ENCODE measurements at regions of chr1 and their contacts with region 1.

Region 1: GRCh38 chr1:212186427-212187207 is 98.6 kb upstream of the PPP2R5A start:
- DNase-seq: peak in 3 of 5 donors; percentile 10 to 22 (median 13)
- H3K4me3 ChIP-seq: peak overlapping the region in 1 of 2 donors; percentile 9
- H3K4me3 Mint-ChIP-seq: peak overlapping the region; percentile 68 to 93 (median 84)
- H3K27ac ChIP-seq: no peak overlapping the region
- H3K27ac Mint-ChIP-seq: peak overlapping the region in 6 of 7 donors; percentile 30 to 94 (median 90)
- H3K4me1 ChIP-seq: peaks cover 33% of the 10 kb centered on the region
- H3K4me1 Mint-ChIP-seq: peaks cover 8 to 44% (median 28%) of the 10 kb centered on the region in 4 donors
- H3K27me3 ChIP-seq: no peaks in the 10 kb centered on the region
- H3K27me3 Mint-ChIP-seq: no peaks in the 10 kb centered on the region

Region 2: DNA sequence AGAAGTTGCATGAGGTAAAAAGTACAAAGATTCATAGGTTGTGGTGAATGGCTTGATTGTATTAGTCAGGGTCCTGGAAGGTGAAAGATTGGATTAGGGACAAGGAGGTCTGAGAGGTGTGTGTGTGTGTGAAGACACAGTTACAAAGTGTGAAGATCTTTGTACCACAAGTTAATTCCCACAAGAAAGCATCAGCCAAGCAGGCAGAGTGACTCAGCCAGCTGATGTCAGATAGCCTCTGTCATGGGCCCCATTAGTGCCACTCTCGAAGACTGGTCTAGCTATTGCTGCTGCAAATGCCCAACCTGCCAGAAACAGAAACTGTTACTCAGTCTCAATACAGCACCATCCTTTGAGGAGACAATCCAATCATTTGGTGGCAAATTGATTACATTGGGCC is 54.6 kb before region 1 on chr1:
- CTCF ChIA-PET with region 1: no interaction called
- POLR2A ChIA-PET with region 1: no interaction called
- intact Hi-C with region 1: no loop called
- DNase-seq: no peak
- H3K4me3 ChIP-seq: no peak overlapping the region
- H3K4me3 Mint-ChIP-seq: no peak overlapping the region
- H3K27ac ChIP-seq: no peak overlapping the region
- H3K27ac Mint-ChIP-seq: no peak overlapping the region
- H3K4me1 ChIP-seq: no peaks in the 10 kb centered on the region
- H3K4me1 Mint-ChIP-seq: no peaks in the 10 kb centered on the region
- H3K27me3 ChIP-seq: no peaks in the 10 kb centered on the region
- H3K27me3 Mint-ChIP-seq: no peaks in the 10 kb centered on the region

Region 3: GRCh38 chr1:212291505-212292134 is 105.0 kb after region 1 on chr1:
- CTCF ChIA-PET with region 1: no interaction called
- POLR2A ChIA-PET with region 1: no interaction called
- intact Hi-C with region 1: loop called (anchors 10 kb)
- DNase-seq: peak in 4 of 5 donors; percentile 57 to 70 (median 64)
- H3K4me3 ChIP-seq: no peak overlapping the region
- H3K4me3 Mint-ChIP-seq: peak overlapping the region; percentile 27 to 70 (median 60)
- H3K27ac ChIP-seq: no peak overlapping the region
- H3K27ac Mint-ChIP-seq: peak overlapping the region in 4 of 7 donors; percentile 0 to 54 (median 16)
- H3K4me1 ChIP-seq: peaks cover 87% of the 10 kb centered on the region
- H3K4me1 Mint-ChIP-seq: peaks cover 66 to 91% (median 81%) of the 10 kb centered on the region in 4 donors
- H3K27me3 ChIP-seq: no peaks in the 10 kb centered on the region
- H3K27me3 Mint-ChIP-seq: no peaks in the 10 kb centered on the region

Measured in CD4-positive, alpha-beta memory T cell (primary cell).